ENCODE measurements at regions of chr1 and their contacts with region 1.

Region 1: DNA sequence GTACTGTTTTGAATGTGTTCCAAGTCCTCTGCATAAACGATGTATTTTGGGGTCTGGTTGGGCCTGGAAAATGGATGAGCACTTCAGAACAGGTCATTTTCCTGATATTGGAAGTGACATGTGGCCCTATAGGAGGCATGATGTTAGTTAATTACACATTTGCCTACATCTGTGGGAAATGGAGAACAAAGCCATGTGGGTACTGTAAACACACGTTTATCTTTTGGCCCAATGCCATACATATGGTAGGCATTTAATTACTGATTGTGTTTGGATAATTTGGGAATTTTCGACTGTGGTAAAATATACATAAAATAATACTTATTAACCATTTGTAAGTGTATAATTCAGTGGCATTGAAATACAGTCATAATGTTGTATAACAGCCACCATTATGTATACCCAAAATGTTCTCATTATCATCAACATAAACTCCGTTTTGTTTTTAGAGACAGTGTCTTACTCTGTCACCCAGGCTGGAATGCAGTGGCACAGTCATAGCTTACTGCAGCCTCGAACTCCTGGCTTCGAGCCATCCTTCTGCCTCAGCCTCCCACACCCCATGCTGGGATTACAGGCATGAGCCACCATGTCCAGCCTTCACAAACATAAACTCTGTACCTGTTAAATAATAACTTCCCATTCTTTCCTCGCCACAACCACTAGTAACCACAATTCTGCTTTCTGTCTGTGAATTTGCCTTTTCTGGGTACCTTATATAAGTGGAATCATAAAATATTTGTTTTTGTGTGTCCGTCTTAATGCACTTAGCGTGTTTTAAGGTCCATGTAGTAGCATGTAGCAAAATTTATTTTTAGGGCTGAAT is 11.9 kb upstream of the RNPEP start:
- DNase-seq: no peak
- H3K4me3 ChIP-seq: no peak overlapping the region
- CTCF ChIP-seq: no peak

Region 2: DNA sequence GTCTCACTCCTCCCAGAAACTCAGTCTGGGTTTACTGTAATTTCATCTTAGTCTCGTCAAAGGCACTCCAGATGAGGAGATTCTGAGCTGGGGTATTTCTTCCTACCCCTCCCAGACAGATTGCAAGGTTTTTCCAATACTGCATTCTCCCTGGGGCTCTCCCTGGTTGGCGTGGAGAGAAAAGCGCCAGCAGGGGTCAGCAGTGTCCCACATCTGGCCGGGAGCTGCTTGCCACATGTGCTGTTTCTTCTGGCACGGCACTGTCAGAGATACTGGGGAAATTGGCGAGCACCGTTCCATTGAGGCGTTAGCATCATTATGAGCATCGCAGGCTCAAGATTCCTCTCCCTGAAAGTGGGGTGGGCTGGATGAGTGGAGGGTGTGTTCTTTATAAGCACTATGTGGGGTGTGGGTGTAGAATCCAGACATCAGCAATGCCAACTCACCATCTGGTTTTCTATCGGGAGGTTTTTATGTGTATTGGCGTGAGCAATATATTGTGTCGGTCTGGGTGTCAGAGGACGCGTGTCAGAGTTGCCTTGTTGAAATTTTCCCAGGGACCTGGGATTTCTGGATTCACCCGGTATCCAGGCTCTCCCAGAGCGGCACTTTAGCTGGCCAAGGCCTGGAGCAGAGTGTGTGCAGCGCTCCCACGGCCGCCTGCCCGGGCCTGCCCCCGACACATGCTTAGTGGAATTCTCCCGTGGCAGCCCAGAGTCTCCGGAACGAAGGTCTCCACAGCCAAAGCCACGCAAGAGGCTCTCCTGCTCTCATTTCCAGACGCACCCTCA is 439.6 kb before region 1 on chr1:
- CTCF ChIA-PET with region 1: interaction called, 15 read pairs
- POLR2A ChIA-PET with region 1: no interaction called
- DNase-seq: peak; percentile 40
- H3K4me3 ChIP-seq: no peak overlapping the region
- CTCF ChIP-seq: peak; percentile 87

Region 3: DNA sequence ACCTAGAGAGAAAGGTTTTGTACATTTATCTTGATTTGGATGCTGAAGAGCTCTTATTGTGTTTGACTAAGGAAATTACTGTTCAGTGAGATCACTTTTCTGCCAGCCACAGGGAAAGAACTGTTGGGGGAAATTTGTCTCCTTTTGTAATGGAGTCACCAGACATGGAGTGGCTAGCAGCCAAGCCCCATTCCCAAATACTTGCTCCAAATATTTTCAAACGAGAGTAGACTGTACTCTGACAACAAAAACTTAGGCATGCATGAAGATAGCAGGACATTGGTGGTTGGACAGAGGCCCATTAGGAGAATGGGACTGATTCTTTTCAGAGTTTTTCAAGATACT is 120.5 kb before region 1 on chr1:
- CTCF ChIA-PET with region 1: interaction called, 10 read pairs
- POLR2A ChIA-PET with region 1: no interaction called
- DNase-seq: peak; percentile 80
- H3K4me3 ChIP-seq: no peak overlapping the region
- CTCF ChIP-seq: no peak

Region 4: GRCh38 chr1:201877877-201878401 is 92.6 kb before region 1 on chr1:
- CTCF ChIA-PET with region 1: interaction called, 244 read pairs
- POLR2A ChIA-PET with region 1: interaction called, 5 read pairs
- DNase-seq: no peak
- H3K4me3 ChIP-seq: no peak overlapping the region
- CTCF ChIP-seq: peak; percentile 66

Region 5: DNA sequence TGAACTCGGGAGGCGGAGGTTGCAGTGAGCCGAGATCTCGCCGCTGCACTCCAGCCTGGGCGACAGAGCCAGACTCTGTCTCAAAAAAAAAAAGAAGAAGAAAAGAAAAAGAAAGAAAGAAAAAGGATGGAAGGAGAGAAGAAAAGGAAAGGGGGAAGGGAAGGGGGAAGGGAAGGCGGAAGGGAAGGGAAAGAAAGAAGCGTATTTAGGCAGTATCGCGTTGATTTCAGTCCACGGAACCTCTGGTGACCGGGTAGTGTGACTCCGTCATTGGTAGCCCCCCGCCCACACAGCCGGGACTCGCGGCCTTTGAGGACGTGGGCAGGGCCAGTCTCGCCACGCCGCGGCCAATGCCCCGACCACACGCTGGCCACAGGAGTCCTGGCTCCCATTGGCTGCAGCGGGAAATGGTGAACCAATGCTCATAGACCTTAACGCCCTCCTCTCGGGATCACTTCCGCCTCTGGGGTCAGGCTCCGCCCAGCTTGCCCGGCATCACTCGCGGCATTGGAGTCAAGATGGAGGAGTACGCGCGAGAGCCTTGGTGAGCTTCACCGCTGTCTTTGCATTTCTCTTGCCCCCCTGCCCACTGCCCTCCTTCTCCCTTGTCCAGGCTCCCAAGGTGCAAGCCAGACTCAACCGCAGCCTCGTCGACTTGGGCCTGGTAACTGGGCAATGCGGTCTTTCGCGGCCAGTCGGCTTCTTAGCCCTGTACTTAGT is 15.4 kb before region 1 on chr1 and contains the start of gene TIMM17A:
- CTCF ChIA-PET with region 1: interaction called, 19 read pairs
- POLR2A ChIA-PET with region 1: no interaction called
- DNase-seq: peak; percentile 90
- H3K4me3 ChIP-seq: peak within 1 kb of the TSS; percentile 100
- CTCF ChIP-seq: no peak

Measured in AG04449 (cell line).